ENCODE measurements at regions of chr21 and their contacts with region 1.

Region 1: DNA sequence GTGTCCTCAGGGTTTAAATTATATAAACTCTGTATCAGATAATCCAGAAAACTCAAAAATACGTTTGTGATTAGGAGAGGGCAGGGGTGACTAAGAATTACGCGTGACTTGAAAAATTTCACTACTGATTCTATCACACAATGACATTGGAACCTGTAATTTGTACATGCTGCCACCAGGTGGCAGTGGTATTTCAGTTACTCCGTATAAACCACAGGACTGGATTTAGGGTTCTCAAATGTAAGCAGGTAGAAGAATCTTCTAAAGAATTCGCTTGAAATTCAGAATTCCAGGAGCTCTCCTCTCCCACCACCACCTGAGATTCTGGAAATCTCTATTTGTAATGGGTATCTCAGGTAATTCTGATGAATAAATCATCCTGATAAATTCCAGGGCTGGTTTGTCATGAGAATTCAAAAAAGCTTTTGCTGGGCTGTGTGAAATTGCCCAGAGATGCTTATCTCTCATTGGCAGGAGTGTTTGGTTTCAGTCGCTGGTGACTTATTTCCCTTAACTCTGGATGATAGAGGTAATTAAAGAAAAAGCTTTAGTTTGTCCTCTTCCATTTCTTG is 1.7 kb upstream of the KRTAP7-1 start:
- DNase-seq: peak; percentile 71
- H3K4me3 ChIP-seq: no peak overlapping the region
- H3K27ac ChIP-seq: no peak overlapping the region
- H3K4me1 ChIP-seq: no peaks in the 10 kb centered on the region
- H3K27me3 ChIP-seq: no peaks in the 10 kb centered on the region
- CTCF ChIP-seq: peak; percentile 58 to 76 (median 63)
- POLR2A ChIP-seq: no peak

Region 2: GRCh38 chr21:31088315-31088714 is 257.0 kb after region 1 on chr21:
- intact Hi-C with region 1: loop called (anchors 10 kb)
- DNase-seq: peak; percentile 85
- H3K4me3 ChIP-seq: peak overlapping the region; percentile 20 to 43
- H3K27ac ChIP-seq: no peak overlapping the region
- H3K4me1 ChIP-seq: no peaks in the 10 kb centered on the region
- H3K27me3 ChIP-seq: no peaks in the 10 kb centered on the region
- CTCF ChIP-seq: peak in 1 of 3 experiments; percentile 1
- POLR2A ChIP-seq: no peak